Sciatic nerve (tissue), 2 donors: ENCODE measurements at regions of chr20 and their contacts with region 1.

Region 1: DNA sequence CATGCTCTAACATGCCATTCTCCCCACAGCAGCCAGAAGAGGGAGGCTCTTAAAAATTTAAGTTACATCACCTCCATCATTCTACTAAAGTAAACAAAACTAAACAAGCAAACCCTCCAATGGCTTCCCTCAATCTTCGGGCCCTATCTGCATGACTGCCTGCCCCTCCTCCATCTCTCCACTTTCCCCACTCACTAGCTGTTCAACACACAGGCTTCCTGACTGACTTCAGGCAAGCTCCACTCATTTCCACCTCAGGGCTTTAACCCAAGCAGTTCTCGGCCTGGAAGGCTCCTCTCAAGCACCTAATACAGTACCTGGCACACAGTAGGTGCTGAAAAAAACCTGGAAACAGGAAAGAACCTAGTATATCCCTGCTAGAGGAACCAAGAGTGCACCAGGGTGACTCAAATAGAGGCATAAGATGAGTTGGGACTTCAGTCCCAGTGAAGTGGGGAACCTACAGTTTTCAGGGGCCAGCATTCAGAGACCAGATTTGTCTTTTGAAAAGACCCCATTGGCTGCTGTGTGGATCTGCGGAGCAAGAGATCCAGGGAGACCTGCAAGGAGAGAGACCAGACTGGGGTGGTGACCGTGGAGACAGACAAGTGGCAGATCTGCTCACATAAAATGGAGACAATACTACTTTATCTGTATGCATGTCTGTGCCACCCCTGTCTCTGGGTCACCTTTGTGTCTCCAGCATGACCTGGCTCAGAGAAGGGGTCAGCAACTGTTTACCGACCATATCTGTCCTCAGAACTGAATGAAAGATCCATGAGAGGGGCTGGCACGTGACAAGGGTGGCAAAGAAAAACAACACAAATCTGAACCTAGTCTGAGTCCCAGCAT is 2.7 kb downstream of the AHCY start:
- DNase-seq: no peak
- ATAC-seq: no peak

Region 2: GRCh38 chr20:34262488-34263288 is 37.8 kb before region 1 on chr20:
- intact Hi-C with region 1: loop called (anchors 1 kb)
- DNase-seq: no peak
- ATAC-seq: peak; percentile 74